Tibial artery (tissue), 4 donors: ENCODE measurements at regions of chr3 and their contacts with region 1.

Region 1: GRCh38 chr3:32018757-32019564 is 37.4 kb downstream of the ZNF860 start:
- DNase-seq: no peak
- H3K4me3 ChIP-seq: no peak overlapping the region
- H3K27ac ChIP-seq: no peak overlapping the region
- H3K4me1 ChIP-seq: peaks cover 0 to 5% (median 0%) of the 10 kb centered on the region in 4 donors
- H3K27me3 ChIP-seq: no peaks in the 10 kb centered on the region
- CTCF ChIP-seq: peak; percentile 71 to 86

Region 2: DNA sequence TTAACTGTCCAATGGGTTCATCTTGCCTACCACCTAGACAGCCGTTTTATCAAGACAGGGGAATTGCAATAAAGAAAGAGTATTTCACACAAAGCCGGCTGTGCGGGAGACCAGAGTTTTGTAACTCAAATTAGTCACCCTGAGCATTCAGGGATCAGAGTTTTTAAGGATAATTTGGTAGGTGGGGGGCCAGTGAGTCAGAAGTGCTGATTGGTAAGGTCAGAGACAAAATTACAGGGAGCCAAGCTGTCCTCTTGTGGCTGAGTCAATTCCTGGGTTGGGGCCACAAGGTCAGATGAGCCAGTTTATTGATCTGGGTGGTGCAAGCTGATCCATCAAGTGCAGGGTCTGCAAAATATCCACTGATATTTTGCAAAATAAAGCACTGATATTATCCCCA is 57.6 kb after region 1 on chr3:
- intact Hi-C with region 1: no loop called
- DNase-seq: no peak
- H3K4me3 ChIP-seq: no peak overlapping the region
- H3K27ac ChIP-seq: no peak overlapping the region
- H3K4me1 ChIP-seq: peaks cover 0 to 6% (median 0%) of the 10 kb centered on the region in 4 donors
- H3K27me3 ChIP-seq: no peaks in the 10 kb centered on the region
- CTCF ChIP-seq: no peak

Region 3: DNA sequence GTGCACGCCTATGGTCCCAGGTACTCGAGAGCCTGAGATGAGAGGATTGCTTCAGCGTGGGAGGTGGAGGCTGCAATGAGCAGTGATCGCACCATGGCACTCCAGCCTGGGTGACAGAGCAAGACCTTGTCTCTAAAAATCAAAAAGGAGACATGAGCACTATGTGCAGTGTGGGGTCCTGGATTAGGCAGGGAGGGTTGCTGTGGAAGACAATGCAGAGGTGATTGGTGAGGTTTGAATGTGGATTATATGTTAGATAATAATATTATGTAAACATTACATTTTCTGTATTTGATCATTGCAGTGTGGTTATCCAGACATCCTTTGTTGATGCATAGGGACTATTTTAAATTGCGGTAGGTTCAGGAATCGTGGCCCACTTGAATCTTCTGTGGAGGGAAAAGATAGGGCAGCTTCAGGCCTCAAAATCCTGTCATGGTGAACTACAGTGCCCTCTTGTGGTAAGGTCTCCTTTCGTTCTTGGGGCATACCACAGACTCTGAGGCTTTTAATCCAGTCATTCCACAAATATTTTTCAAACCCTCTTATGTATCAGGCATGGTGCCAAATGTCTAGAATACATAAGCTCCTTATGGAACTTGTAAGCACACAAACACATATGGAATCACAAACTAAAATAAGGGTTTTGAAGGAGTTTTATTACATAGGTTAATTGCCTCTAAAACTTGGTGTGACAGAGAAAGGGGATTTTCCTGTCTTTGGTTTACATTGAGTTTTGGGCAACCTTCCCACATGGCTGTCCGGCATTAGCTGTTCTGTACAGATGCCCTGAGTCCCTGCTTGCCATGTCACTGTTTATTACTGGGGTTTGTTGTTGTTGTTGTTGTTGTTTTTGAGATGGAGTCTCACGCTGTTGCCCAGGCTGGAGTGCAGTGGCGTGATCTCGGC is 125.1 kb after region 1 on chr3:
- intact Hi-C with region 1: loop called (anchors 2 kb)
- DNase-seq: peak in 1 of 2 donors; percentile 42
- H3K4me3 ChIP-seq: no peak overlapping the region
- H3K27ac ChIP-seq: no peak overlapping the region
- H3K4me1 ChIP-seq: peaks cover 0 to 4% (median 2%) of the 10 kb centered on the region in 4 donors
- H3K27me3 ChIP-seq: no peaks in the 10 kb centered on the region
- CTCF ChIP-seq: peak; percentile 76 to 88